ENCODE measurements at regions of chr9 and their contacts with region 1.

Region 1: GRCh38 chr9:120464176-120464886 is 115.6 kb downstream of the CDK5RAP2 start:
- DNase-seq: no peak
- H3K4me3 ChIP-seq: no peak overlapping the region
- H3K27ac ChIP-seq: no peak overlapping the region
- H3K4me1 ChIP-seq: peaks cover 0 to 3% (median 1%) of the 10 kb centered on the region in 4 experiments
- H3K27me3 ChIP-seq: no peaks in the 10 kb centered on the region

Region 2: GRCh38 chr9:119974026-119974425 is 490.3 kb before region 1 on chr9:
- CTCF ChIA-PET with region 1: no interaction called
- POLR2A ChIA-PET with region 1: no interaction called
- DNase-seq: no peak
- H3K4me3 ChIP-seq: no peak overlapping the region
- H3K27ac ChIP-seq: no peak overlapping the region
- H3K4me1 ChIP-seq: no peaks in the 10 kb centered on the region
- H3K27me3 ChIP-seq: no peaks in the 10 kb centered on the region

Region 3: GRCh38 chr9:120477521-120478001 is 13.2 kb after region 1 on chr9:
- CTCF ChIA-PET with region 1: interaction called, 18 read pairs
- POLR2A ChIA-PET with region 1: no interaction called
- DNase-seq: peak; percentile 16 to 47 (median 26)
- H3K4me3 ChIP-seq: no peak overlapping the region
- H3K27ac ChIP-seq: no peak overlapping the region
- H3K4me1 ChIP-seq: peaks cover 2 to 7% (median 3%) of the 10 kb centered on the region in 4 experiments
- H3K27me3 ChIP-seq: no peaks in the 10 kb centered on the region

Region 4: GRCh38 chr9:120730661-120731514 is 266.6 kb after region 1 on chr9:
- CTCF ChIA-PET with region 1: no interaction called
- POLR2A ChIA-PET with region 1: no interaction called
- DNase-seq: no peak
- H3K4me3 ChIP-seq: no peak overlapping the region
- H3K27ac ChIP-seq: no peak overlapping the region
- H3K4me1 ChIP-seq: peaks cover 8 to 24% (median 19%) of the 10 kb centered on the region in 4 experiments
- H3K27me3 ChIP-seq: no peaks in the 10 kb centered on the region